ENCODE measurements at regions of chr10 and their contacts with region 1.

Region 1: DNA sequence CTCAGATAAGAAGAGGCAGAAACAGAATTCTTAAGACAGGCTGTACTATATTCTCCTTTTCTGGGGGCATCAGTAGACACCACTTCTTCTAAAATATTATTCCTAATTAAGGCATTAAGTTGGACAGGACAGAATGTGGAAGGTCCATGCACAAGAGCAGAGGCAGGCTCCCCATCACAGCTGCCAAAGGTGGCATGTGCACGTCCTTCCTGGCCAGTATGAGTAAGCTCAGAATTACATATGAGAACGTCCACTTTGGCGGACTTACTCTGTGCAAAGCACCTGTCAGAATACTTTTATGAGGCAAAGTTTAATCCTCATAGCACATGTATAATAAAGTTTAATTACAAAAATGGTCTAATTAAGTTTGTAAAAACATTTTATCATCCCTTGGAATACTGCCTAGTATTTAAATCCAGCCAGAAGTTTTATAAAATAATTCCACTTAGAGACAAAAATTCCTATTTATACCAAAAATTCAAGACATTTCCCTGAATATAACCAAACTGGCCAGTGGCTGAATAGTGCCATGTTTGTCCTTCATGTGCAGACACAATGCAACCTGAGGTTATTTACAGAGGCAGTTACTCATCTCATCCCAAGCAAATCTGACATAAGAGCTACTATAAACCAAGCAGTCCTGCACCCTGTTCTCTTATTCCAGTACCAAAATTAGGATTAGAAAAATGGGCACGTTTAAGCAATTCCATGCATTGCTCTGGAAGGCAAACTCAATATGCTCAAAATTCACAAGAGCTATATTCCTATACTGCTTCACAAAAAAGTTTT is 65.5 kb downstream of the CACUL1 start:
- DNase-seq: no peak
- H3K4me3 Mint-ChIP-seq: no peak overlapping the region
- H3K27ac Mint-ChIP-seq: no peak overlapping the region
- H3K4me1 Mint-ChIP-seq: no peaks in the 10 kb centered on the region
- H3K27me3 Mint-ChIP-seq: no peaks in the 10 kb centered on the region

Region 2: DNA sequence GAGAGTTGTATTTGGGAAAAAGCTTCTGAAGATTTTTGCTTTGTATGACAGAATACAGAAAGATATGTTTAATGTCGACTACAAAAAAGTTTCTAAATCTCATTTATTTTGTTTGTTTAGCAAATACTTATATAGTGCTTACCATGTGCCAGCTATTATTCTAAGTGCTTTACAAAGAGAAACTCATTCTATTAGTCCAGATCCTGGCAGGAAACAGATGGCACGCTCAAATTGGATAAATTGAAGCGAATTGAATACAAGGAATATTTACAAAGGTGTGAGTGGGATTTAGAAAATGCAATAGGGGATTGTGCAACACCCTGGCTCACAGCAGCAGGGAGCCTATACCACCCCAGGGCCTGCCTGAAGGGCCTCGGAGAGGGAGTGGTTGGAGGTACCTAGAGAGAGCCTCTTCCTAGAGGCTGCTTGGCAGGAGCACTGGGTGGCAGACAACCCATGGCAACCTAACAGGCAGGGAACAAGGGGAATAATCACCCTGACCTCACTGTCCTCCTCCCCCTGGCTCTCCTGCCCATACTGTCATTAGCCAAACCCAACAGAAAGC is 319.5 kb before region 1 on chr10:
- CTCF ChIA-PET with region 1: no interaction called
- POLR2A ChIA-PET with region 1: interaction called, 16 read pairs
- DNase-seq: no peak
- H3K4me3 Mint-ChIP-seq: no peak overlapping the region
- H3K27ac Mint-ChIP-seq: no peak overlapping the region
- H3K4me1 Mint-ChIP-seq: no peaks in the 10 kb centered on the region
- H3K27me3 Mint-ChIP-seq: peaks cover 23% of the 10 kb centered on the region